B cell (primary cell): ENCODE measurements at regions of chr3 and their contacts with region 1.

Region 1: DNA sequence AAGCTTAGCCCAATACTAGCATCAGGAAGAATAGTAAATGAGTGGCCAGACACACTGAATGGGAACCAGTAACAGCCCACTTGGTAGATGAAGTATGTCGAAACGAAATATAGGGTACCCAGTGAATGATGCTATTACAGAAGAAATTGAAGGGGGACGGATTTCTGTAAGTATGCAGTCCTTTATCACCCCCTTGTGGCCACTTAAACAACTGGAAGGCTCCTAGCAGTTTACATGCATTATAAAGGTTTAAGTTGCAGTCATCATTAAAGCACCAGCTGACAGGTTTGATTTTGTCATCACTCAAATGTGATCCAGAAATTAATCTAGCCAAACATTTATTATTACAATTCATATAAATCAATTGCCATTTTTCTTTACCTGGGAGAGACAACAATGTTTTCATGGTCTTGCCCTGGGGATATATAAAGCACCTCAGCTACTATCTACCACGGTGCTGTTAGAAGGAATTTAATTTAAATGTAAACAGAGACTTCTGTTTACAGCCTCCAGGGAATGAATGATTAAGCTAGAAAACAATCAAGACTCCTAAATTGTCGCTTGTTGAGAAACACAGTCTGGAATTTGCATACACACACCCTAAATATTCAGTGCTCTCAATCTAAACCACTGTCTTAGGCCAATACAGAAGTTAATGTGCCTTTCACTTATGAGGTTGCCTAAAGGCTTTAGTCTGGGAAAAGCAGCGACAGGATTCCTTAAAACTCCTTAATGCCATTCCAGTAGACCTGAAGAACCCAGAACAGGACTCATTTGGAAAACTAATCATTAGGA is 7.8 kb downstream of the EIF1B start:
- DNase-seq: peak; percentile 77
- ATAC-seq: peak; percentile 87
- H3K4me3 ChIP-seq: no peak overlapping the region
- H3K4me3 Mint-ChIP-seq: no peak overlapping the region
- H3K27ac ChIP-seq: no peak overlapping the region
- H3K27ac Mint-ChIP-seq: no peak overlapping the region
- H3K4me1 ChIP-seq: no peaks in the 10 kb centered on the region
- H3K4me1 Mint-ChIP-seq: peaks cover 7% of the 10 kb centered on the region
- H3K27me3 ChIP-seq: no peaks in the 10 kb centered on the region
- H3K27me3 Mint-ChIP-seq: no peaks in the 10 kb centered on the region
- CTCF ChIP-seq: peak; percentile 88

Region 2: GRCh38 chr3:40191850-40192448 is 125.3 kb before region 1 on chr3:
- CTCF ChIA-PET with region 1: interaction called, 135 read pairs
- POLR2A ChIA-PET with region 1: no interaction called
- intact Hi-C with region 1: no loop called
- DNase-seq: peak; percentile 60
- ATAC-seq: peak; percentile 73
- H3K4me3 ChIP-seq: no peak overlapping the region
- H3K4me3 Mint-ChIP-seq: no peak overlapping the region
- H3K27ac ChIP-seq: no peak overlapping the region
- H3K27ac Mint-ChIP-seq: no peak overlapping the region
- H3K4me1 ChIP-seq: no peaks in the 10 kb centered on the region
- H3K4me1 Mint-ChIP-seq: no peaks in the 10 kb centered on the region
- H3K27me3 ChIP-seq: no peaks in the 10 kb centered on the region
- H3K27me3 Mint-ChIP-seq: no peaks in the 10 kb centered on the region
- CTCF ChIP-seq: peak; percentile 96

Region 3: DNA sequence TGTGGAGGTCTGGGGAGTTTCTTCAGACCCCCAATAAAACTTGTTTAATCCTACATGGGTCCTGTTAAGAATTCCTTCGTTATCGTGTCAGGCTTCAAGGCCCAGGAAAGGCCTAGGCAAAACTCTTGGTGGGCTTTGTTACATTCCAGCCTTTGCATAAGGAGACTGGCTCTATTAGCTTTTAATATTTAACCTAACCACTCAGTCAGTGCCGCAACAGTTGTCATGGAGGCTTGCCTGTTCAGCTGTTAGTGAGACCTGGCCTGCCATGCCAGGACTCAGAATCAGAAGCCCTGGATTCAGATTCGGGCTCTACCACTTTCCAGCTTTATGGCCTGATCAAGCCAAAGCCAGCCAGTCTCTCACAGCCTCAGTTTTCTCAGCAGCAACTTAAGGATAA is 11.8 kb after region 1 on chr3:
- CTCF ChIA-PET with region 1: interaction called, 19 read pairs
- POLR2A ChIA-PET with region 1: no interaction called
- intact Hi-C with region 1: loop called (anchors 1 kb)
- DNase-seq: no peak
- ATAC-seq: no peak
- H3K4me3 ChIP-seq: no peak overlapping the region
- H3K4me3 Mint-ChIP-seq: no peak overlapping the region
- H3K27ac ChIP-seq: no peak overlapping the region
- H3K27ac Mint-ChIP-seq: no peak overlapping the region
- H3K4me1 ChIP-seq: peaks cover 0 to 5% of the 10 kb centered on the region in 2 donors
- H3K4me1 Mint-ChIP-seq: peaks cover 3% of the 10 kb centered on the region
- H3K27me3 ChIP-seq: no peaks in the 10 kb centered on the region
- H3K27me3 Mint-ChIP-seq: peaks cover 7% of the 10 kb centered on the region
- CTCF ChIP-seq: no peak

Region 4: GRCh38 chr3:40398346-40398745 is 81.1 kb after region 1 on chr3:
- CTCF ChIA-PET with region 1: no interaction called
- POLR2A ChIA-PET with region 1: no interaction called
- intact Hi-C with region 1: no loop called
- DNase-seq: no peak
- ATAC-seq: no peak
- H3K4me3 ChIP-seq: no peak overlapping the region
- H3K4me3 Mint-ChIP-seq: no peak overlapping the region
- H3K27ac ChIP-seq: no peak overlapping the region
- H3K27ac Mint-ChIP-seq: no peak overlapping the region
- H3K4me1 ChIP-seq: no peaks in the 10 kb centered on the region
- H3K4me1 Mint-ChIP-seq: no peaks in the 10 kb centered on the region
- H3K27me3 ChIP-seq: no peaks in the 10 kb centered on the region
- H3K27me3 Mint-ChIP-seq: peaks cover 7% of the 10 kb centered on the region
- CTCF ChIP-seq: no peak